ENCODE measurements at regions of chr3 and their contacts with region 1.

Region 1: DNA sequence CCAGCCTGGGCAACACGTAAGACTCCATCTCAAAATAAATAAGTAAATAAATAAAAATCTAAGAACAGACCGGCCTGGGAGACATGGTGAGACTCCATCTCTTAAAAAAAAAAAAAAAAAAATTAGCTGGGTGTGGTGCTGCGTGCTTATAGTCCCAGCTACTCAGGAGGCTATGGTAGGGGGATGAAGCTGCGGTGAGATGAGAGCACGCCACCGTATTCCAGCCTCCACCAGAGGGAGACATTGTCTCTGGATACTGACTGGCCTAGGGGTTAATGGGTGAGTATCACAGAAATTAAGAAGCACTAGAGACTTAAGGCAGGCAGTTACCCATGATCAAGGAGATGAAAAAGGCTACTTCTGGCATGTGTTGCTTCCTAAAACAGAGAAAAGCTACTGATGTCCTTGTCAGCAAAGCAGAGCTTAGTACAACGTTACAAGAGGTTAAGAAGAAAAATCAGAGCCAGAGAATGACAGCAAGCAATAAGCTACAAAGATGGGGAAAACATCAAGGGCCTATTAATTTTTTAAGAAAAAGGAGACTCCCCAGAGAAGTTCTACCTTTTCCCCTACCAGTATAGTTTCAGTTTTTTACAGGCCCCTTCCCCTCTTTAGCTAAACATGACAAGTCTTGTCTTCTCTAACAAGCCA is 8.6 kb downstream of the TFRC start:
- DNase-seq: peak; percentile 58 to 64
- ATAC-seq: peak; percentile 98 to 99
- H3K4me3 ChIP-seq: no peak overlapping the region
- H3K27ac ChIP-seq: no peak overlapping the region
- H3K4me1 ChIP-seq: no peaks in the 10 kb centered on the region
- CTCF ChIP-seq: peak; percentile 64
- EP300 ChIP-seq: no peak
- POLR2A ChIP-seq: no peak
- RAD21 ChIP-seq: peak; percentile 62 to 69

Region 2: DNA sequence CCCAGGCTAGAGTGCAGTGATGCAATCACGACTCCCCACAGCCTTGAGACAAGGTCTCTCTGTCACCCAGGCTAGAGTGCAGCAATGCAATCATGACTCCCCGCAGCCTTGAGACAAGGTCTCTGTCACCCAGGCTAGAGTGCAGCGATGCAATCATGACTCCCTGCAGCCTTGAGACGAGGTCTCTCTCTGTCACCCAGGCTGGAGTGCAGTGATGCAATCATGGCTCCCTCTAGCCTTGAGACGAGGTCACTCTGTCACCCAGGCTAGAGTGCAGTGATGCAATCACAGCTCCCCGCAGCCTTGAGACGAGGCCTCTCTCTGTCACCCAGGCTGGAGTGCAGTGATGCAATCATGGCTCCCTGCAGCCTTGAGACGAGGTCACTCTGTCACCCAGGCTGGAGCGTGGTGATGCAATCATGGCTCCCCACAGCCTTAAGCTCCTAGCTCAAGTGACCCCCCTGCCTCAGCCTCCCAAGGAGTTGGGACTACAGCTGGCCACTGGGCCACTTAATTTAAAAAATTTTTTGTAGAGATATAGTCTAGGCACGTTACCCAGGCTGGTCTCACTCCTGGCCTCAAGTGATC is 17.5 kb before region 1 on chr3:
- CTCF ChIA-PET with region 1: interaction called, 11 read pairs
- POLR2A ChIA-PET with region 1: no interaction called
- DNase-seq: peak in 1 of 2 experiments; percentile 8
- ATAC-seq: peak in 1 of 2 experiments; percentile 39; a peak in 2 of 6 replicates
- H3K4me3 ChIP-seq: no peak overlapping the region
- H3K27ac ChIP-seq: peak overlapping the region in 1 of 2 experiments; percentile 11; a peak in 2 of 6 replicates
- H3K4me1 ChIP-seq: peaks cover 6% of the 10 kb centered on the region; the same call in 2 of the 3 replicates
- CTCF ChIP-seq: no peak
- EP300 ChIP-seq: no peak
- POLR2A ChIP-seq: no peak
- RAD21 ChIP-seq: no peak

Region 3: GRCh38 chr3:196093317-196094111 is 20.2 kb after region 1 on chr3:
- CTCF ChIA-PET with region 1: interaction called, 12 read pairs
- POLR2A ChIA-PET with region 1: no interaction called
- DNase-seq: no peak
- ATAC-seq: no peak
- H3K4me3 ChIP-seq: no peak overlapping the region
- H3K27ac ChIP-seq: no peak overlapping the region
- H3K4me1 ChIP-seq: no peaks in the 10 kb centered on the region
- CTCF ChIP-seq: no peak
- EP300 ChIP-seq: no peak
- POLR2A ChIP-seq: no peak
- RAD21 ChIP-seq: no peak